ENCODE measurements at regions of chr16 and their contacts with region 1.

Region 1: DNA sequence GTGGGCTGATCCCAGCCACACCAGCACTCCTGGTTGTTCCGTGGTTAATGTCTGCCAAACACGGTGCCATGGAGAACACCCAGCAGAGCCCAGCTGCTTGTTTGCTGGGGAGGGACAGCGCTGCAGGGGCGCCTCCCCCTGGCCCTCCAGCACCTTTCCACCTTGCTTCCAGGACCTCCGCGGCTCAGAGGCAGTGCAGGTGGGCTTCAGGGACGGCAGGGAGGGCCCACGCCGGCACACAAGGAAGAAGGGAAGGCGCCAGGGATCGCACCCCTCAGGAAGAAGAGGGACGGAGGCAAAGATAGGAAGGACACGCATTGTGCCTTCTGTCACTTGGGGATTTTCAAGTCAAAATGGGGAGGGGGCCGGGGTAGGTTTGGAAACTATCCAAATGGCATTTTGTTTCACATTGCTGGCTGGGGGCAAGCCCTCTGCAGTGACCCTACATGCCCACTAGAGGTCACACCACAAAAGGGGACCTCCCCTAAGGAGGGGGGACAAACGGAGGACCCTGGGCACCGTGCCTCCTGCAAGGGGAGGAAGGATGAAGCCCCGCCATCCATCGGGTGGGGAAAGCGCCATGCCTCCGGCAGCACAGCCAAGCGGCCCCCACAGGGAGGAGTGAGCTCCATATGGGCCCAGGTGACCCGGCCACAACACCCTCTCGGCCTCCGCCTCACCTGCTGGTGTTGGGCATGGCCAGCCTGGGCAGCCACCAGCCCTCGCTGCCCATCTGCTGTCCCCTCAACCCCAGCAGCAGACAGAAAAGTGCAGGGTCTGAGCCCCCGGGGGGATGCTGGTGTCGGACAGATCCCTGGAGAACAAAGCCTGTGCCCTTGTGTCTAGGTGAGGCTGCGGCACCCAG is 7.5 kb upstream of the C16orf95 start:
- DNase-seq: no peak
- ATAC-seq: peak; percentile 89
- H3K4me3 ChIP-seq: no peak overlapping the region
- H3K27ac ChIP-seq: no peak overlapping the region
- H3K4me1 ChIP-seq: no peaks in the 10 kb centered on the region
- H3K27me3 ChIP-seq: no peaks in the 10 kb centered on the region
- CTCF ChIP-seq: peak; percentile 72 to 89 (median 81)
- EP300 ChIP-seq: no peak
- POLR2A ChIP-seq: no peak
- RAD21 ChIP-seq: peak; percentile 64

Region 2: GRCh38 chr16:87393680-87394055 is 69.0 kb after region 1 on chr16:
- CTCF ChIA-PET with region 1: interaction called, 15 read pairs
- POLR2A ChIA-PET with region 1: interaction called, 4 read pairs
- RAD21 ChIA-PET with region 1: interaction called, 3 read pairs
- SMC1A ChIA-PET with region 1: no interaction called
- in situ Hi-C with region 1: no loop called
- intact Hi-C with region 1: no loop called
- DNase-seq: no peak
- ATAC-seq: no peak
- H3K4me3 ChIP-seq: peak overlapping the region; percentile 77
- H3K27ac ChIP-seq: no peak overlapping the region
- H3K4me1 ChIP-seq: peaks cover 8% of the 10 kb centered on the region
- H3K27me3 ChIP-seq: no peaks in the 10 kb centered on the region
- CTCF ChIP-seq: no peak
- EP300 ChIP-seq: no peak
- POLR2A ChIP-seq: no peak
- RAD21 ChIP-seq: no peak